Ascending aorta (tissue), 2 donors: ENCODE measurements at regions of chr3 and their contacts with region 1.

Region 1: DNA sequence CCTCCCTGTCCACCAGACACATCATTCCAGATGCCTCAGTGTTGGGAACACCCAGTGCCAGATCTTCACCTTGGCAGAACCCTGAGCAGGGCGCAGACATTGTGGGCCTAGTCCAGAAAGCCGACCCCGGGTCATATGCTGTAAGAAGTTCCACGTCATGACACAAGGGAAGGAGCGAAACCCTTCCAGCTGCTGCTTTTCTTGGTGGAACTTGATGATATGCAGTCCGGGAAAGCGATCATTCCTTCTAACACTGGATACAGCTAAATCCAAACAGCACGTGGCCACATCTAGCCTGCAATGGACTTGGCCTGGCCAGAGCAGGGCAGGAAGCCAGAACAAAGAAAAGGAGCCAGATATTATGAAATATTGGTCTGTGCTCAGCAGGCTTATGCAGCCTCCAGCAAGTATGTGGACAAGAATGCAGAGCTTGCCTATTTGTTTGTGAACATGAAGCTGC is 22.0 kb downstream of the GASK1A start:
- DNase-seq: peak; percentile 69 to 94
- H3K4me3 ChIP-seq: peak overlapping the region in 1 of 2 donors; percentile 29
- H3K27ac ChIP-seq: peak overlapping the region; percentile 50 to 86
- H3K4me1 ChIP-seq: peaks cover 20 to 23% of the 10 kb centered on the region in 2 donors
- H3K27me3 ChIP-seq: no peaks in the 10 kb centered on the region
- CTCF ChIP-seq: no peak

Region 2: DNA sequence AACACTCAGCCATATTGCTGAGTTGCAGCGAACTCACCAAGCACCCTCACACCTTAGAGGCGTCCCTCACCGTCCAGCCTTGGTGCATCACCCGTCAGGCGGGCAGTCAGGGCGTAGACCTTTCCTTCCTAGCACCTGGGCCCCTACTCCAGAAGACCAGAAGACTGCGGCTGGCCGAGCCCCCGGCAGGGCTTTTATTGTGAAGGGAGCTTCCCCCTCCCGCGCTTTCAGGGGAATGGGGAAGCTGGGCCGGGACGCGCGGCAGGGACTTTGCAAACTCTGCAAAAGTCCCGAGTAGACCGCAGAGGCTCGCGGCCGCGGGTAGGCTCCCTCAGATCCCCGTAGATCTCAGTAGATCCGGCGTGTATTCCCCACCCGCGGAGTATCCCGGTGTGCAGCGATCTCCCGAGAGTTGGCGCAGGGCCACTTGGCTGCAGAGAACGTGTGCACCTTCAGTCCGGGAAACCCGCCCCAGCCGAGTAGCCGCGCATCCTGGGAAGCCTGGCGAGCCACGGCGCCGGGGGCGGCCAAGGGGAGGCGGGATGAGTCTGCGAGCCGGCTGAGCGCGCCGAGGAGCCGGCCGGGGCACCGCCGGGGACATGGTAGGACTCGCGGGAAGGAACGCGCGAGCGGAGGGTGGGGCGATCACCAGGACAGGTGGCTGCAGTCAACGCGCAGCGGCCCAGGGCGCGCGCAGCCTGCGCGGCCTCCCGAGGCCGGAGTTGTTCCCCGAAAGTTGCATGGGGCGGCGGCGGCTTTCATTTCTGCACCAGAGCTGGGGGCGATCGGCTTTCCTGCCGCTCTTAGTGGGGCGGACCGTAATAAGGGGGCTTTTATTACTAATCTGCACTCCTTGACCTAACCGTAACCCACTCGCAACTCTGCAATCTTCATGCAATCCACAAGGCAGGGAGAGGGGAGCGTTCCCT is 21.8 kb before region 1 on chr3 and contains the start of gene GASK1A:
- intact Hi-C with region 1: loop called (anchors 2 kb)
- DNase-seq: peak in 1 of 2 donors; percentile 76
- H3K4me3 ChIP-seq: peak within 1 kb of the TSS; percentile 78 to 83
- H3K27ac ChIP-seq: peak within 1 kb of the TSS in 1 of 2 donors; percentile 31
- H3K4me1 ChIP-seq: peaks cover 0 to 9% of the 10 kb centered on the region in 2 donors
- H3K27me3 ChIP-seq: no peaks in the 10 kb centered on the region
- CTCF ChIP-seq: no peak
- total RNA-seq, gene GASK1A: 25.8 TPM

Region 3: DNA sequence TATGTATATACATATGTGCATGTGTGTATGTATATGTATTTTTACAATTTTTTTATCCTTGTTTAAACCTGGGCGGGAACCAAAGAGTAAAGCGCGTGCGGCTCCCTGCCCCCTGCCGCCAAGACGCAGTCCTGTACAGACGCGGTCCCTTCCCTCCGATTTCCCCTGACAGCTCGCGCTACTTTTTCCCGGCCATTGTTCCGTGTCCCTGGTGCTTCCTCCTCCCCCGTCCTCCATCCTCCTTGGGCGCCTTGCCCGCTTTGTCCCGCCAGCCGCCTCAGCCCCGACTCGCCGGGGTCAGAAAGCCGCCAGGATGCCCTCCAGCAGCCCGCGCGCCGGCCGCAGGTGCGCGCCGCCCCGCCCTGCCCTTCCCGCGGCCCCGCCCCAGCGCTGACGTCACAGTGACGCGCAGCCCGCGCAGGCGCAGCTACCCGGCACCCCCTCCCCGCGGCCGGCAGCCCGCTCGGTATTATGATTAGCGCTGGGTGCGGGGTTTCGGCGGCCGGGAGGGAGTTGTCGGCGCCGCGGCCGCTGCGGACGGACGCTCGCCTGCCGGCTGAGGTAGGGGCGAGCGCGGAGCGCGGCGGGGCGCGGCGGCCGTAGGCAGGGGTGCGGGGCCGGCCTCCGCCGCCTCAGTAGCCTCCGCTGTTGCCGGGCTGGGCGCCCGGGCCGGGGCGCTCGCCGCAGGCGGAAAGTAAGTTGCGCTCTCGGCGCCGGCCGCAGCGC is 285.2 kb after region 1 on chr3 and contains the start of gene SNRK:
- intact Hi-C with region 1: loop called (anchors 5 kb)
- DNase-seq: peak; percentile 20 to 91
- H3K4me3 ChIP-seq: peak within 1 kb of the TSS; percentile 79 to 86
- H3K27ac ChIP-seq: peak within 1 kb of the TSS; percentile 58 to 84
- H3K4me1 ChIP-seq: peaks cover 0 to 12% of the 10 kb centered on the region in 2 donors
- H3K27me3 ChIP-seq: no peaks in the 10 kb centered on the region
- CTCF ChIP-seq: peak in 2 of 3 experiments; percentile 8 to 31
- total RNA-seq, gene SNRK: 44.3 TPM